ENCODE measurements at regions of chr1 and their contacts with region 1.

Region 1: DNA sequence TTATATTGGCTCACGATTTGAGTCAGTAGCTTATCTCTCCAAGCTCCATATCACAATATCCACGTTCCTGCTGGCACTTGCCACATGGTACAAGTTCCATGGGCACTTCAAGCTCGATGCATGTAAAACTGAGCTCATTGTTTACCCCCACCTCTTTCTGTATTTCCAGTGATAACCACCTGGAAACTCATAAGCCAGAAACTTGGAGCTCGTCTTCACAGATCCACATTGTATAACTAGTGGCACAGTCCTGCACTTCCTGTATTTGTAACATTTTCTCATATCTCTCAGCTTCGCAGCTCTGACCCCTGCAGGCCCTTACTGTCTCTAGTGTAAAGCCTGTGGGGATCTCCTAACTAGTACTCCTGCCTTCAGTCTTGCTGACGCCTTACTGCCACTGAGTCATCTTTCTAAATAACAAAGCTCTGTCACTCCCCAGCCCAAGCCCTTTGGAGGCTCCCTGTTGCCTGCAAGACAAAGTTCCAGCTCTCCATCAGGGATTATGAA is 6.5 kb upstream of the C2CD4D start:
- DNase-seq: peak; percentile 67
- H3K4me3 Mint-ChIP-seq: peak overlapping the region; percentile 7
- H3K27ac Mint-ChIP-seq: peak overlapping the region; percentile 86
- H3K4me1 Mint-ChIP-seq: peaks cover 44% of the 10 kb centered on the region
- H3K27me3 Mint-ChIP-seq: no peaks in the 10 kb centered on the region

Region 2: DNA sequence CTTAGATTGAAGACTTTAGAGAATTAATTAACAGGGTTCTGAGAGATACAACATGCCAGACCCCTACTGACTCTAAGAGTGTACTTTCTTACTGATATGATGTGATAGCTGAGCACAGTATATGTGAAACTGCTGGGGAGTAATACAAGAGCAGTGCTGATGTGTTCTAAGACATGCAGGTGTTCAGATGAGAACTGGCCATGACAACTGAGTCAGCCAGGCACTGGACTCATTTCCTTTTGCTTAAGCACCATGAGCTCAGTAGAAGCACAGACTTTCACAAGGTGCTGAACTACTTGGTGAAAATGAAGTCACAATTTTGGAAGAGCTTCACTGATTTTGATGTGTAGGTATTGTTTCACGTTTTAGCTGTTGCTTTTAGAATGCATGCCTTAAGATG is 370.9 kb before region 1 on chr1:
- CTCF ChIA-PET with region 1: no interaction called
- POLR2A ChIA-PET with region 1: no interaction called
- intact Hi-C with region 1: no loop called
- DNase-seq: peak; percentile 69
- H3K4me3 Mint-ChIP-seq: no peak overlapping the region
- H3K27ac Mint-ChIP-seq: peak overlapping the region; percentile 59
- H3K4me1 Mint-ChIP-seq: peaks cover 26% of the 10 kb centered on the region
- H3K27me3 Mint-ChIP-seq: peaks cover 3% of the 10 kb centered on the region

Region 3: DNA sequence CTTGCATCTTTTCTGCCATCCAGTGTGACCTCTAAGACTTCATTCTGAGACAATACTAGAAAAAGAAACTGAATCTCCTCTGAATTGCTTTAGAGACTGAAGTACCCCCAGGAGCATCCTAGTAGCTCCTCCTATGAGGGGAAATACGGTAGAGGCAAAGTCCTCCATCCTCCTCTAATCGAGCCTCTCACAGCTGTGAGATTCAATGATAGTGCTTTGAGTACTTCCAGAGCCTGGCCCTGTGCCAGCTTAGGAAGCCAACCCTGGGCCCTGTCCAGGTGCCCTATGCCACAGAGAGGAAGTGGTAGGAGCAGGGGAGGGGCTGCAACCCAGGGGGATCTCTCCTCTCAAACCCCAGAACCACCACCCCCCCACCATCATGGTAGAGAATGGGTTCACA is 25.2 kb before region 1 on chr1:
- CTCF ChIA-PET with region 1: no interaction called
- POLR2A ChIA-PET with region 1: interaction called, 4 read pairs
- intact Hi-C with region 1: loop called (anchors 1 kb)
- DNase-seq: peak; percentile 55
- H3K4me3 Mint-ChIP-seq: peak overlapping the region; percentile 36
- H3K27ac Mint-ChIP-seq: peak overlapping the region; percentile 85
- H3K4me1 Mint-ChIP-seq: peaks cover 67% of the 10 kb centered on the region
- H3K27me3 Mint-ChIP-seq: no peaks in the 10 kb centered on the region

Region 4: DNA sequence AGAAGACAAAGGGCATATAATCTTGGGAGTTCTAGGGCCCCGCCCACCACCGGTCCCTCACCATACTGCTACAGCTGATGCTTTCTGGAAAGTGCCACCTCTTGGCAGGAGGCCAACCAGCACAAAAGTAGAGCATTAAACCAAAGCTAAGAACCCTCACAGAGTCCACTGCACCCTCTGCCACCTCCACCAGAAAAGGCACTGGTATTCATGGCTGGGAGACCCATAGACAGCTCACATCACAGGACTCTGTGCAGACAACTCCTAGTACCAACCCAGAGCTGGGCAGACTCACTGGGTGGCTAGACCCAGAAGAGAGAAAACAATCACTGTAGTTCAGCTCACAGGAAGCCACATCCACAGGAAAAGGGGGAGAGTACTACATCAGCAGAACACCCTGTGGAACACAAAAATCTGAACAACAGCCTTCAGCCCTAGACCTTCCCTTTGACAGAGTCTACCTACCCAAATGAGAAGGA is 52.4 kb after region 1 on chr1:
- CTCF ChIA-PET with region 1: no interaction called
- POLR2A ChIA-PET with region 1: no interaction called
- intact Hi-C with region 1: loop called (anchors 5 kb)
- DNase-seq: peak; percentile 57
- H3K4me3 Mint-ChIP-seq: peak overlapping the region; percentile 30
- H3K27ac Mint-ChIP-seq: peak overlapping the region; percentile 96
- H3K4me1 Mint-ChIP-seq: peaks cover 58% of the 10 kb centered on the region
- H3K27me3 Mint-ChIP-seq: no peaks in the 10 kb centered on the region

Region 5: GRCh38 chr1:151939779-151940178 is 93.7 kb after region 1 on chr1:
- CTCF ChIA-PET with region 1: no interaction called
- POLR2A ChIA-PET with region 1: no interaction called
- intact Hi-C with region 1: loop called (anchors 2 kb)
- DNase-seq: no peak
- H3K4me3 Mint-ChIP-seq: no peak overlapping the region
- H3K27ac Mint-ChIP-seq: no peak overlapping the region
- H3K4me1 Mint-ChIP-seq: peaks cover 38% of the 10 kb centered on the region
- H3K27me3 Mint-ChIP-seq: no peaks in the 10 kb centered on the region

Region 6: GRCh38 chr1:151993654-151994496 is 147.8 kb after region 1 on chr1 and contains the start of gene S100A10:
- CTCF ChIA-PET with region 1: no interaction called
- POLR2A ChIA-PET with region 1: no interaction called
- intact Hi-C with region 1: loop called (anchors 5 kb)
- DNase-seq: peak; percentile 83
- H3K4me3 Mint-ChIP-seq: peak within 1 kb of the TSS; percentile 94
- H3K27ac Mint-ChIP-seq: peak within 1 kb of the TSS; percentile 90
- H3K4me1 Mint-ChIP-seq: peaks cover 47% of the 10 kb centered on the region
- H3K27me3 Mint-ChIP-seq: no peaks in the 10 kb centered on the region
- total RNA-seq, gene S100A10: 257 to 270 TPM